ENCODE measurements at regions of chr6 and their contacts with region 1.

Region 1: DNA sequence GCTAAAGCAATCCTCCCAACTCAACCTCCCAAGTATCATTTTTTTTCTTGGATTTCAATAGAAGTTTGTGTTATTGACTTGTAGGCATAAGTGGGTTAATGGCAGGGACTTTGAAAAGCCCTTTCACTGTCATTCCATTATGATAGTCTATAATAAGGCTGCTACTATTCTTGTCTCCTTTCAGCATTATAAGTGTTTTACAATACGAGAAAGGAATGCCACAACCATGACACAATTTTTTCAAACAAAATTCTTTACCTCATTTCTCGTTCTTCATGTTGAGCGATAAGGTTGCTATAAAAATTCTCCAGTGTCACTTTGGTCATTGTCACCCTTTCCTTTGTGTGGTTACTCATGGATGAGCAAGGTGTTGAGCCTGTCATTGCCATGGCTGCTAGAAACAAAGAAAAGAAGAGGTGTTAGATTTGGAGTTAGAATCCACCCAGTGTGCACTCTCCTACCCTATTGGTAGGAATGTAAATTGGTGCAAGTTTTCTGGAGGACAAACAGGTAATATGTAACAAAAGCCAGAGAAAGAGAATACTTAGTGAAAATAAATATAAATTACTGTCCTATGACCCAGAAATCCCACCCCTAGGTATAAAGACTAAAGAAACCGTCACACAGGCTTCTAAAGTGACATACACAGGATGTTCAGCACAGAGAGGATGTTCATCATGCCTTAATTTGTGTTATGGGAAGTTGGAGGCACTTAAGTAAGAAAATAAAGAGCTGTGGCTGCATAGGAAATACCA is 7.3 kb downstream of the STK38 start:
- DNase-seq: no peak
- ATAC-seq: no peak
- H3K4me3 ChIP-seq: no peak overlapping the region
- H3K4me3 Mint-ChIP-seq: no peak overlapping the region
- H3K27ac ChIP-seq: no peak overlapping the region
- H3K27ac Mint-ChIP-seq: no peak overlapping the region
- H3K4me1 ChIP-seq: peaks cover 22% of the 10 kb centered on the region in 2 donors
- H3K4me1 Mint-ChIP-seq: peaks cover 41% of the 10 kb centered on the region
- H3K27me3 ChIP-seq: no peaks in the 10 kb centered on the region
- H3K27me3 Mint-ChIP-seq: no peaks in the 10 kb centered on the region
- CTCF ChIP-seq: no peak

Region 2: DNA sequence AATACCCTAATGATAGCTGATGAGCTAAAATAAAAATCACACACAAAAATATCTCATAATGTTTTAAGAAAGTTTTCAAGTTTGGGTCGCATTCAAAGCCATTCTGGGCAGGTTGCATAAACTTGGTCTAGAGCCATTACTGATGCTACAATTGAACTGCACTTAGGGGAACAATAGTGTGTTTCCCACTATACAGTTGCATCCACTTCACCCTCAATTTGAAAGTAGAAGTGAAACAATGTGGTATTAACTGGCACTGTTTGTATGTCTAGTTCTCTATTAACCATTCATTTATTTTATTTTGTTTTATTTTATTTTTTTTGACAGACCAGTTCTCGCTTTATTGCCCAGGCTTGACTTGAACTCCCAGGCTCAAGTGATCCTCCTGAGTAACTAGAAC is 30.3 kb after region 1 on chr6:
- CTCF ChIA-PET with region 1: no interaction called
- POLR2A ChIA-PET with region 1: interaction called, 12 read pairs
- intact Hi-C with region 1: no loop called
- DNase-seq: peak; percentile 32
- ATAC-seq: peak; percentile 53
- H3K4me3 ChIP-seq: no peak overlapping the region
- H3K4me3 Mint-ChIP-seq: no peak overlapping the region
- H3K27ac ChIP-seq: no peak overlapping the region
- H3K27ac Mint-ChIP-seq: no peak overlapping the region
- H3K4me1 ChIP-seq: peaks cover 3 to 6% of the 10 kb centered on the region in 2 donors
- H3K4me1 Mint-ChIP-seq: peaks cover 4% of the 10 kb centered on the region
- H3K27me3 ChIP-seq: no peaks in the 10 kb centered on the region
- H3K27me3 Mint-ChIP-seq: no peaks in the 10 kb centered on the region
- CTCF ChIP-seq: no peak

Measured in B cell (primary cell).